Gastrocnemius medialis (tissue), 4 donors: ENCODE measurements at regions of chr10 and their contacts with region 1.

Region 1: GRCh38 chr10:59606551-59606961 is 103.1 kb downstream of the SLC16A9 start:
- DNase-seq: no peak
- ATAC-seq: no peak
- H3K4me3 ChIP-seq: no peak overlapping the region
- H3K27ac ChIP-seq: no peak overlapping the region
- H3K4me1 ChIP-seq: no peaks in the 10 kb centered on the region
- H3K27me3 ChIP-seq: no peaks in the 10 kb centered on the region
- CTCF ChIP-seq: no peak
- POLR2A ChIP-seq: no peak

Region 2: DNA sequence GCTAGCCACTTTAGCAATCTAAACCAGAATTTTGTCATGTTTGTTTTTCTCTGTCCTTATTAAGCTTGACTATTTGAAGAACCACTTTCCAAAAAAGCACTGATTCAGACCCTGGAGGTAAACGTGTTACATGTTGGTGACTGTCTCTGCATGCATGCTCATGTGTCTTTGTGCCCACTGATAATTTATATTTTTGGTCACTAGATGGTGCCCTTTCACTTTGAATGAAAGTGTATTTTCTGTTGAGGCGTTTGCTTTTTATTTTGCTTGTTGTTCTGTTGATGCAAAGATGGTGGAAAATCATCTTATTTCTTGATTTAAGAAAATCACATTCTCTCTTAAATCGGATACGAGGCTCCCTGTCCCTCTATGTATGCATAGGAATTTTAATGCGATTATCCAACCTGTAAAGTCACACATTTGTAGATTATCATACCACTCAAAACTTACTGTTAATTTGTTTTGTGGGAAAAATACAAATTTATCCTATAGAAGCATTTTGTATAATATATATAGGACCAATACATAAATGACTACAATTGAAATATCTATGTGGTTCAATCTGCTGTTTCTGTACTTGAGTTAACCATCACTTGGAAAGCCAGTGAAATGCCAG is 824.6 kb before region 1 on chr10:
- in situ Hi-C with region 1: loop called in 2 of 4 experiments (anchors 25 kb)
- intact Hi-C with region 1: no loop called
- DNase-seq: no peak
- ATAC-seq: peak; percentile 50 to 61
- H3K4me3 ChIP-seq: no peak overlapping the region
- H3K27ac ChIP-seq: peak overlapping the region; percentile 13 to 55 (median 40)
- H3K4me1 ChIP-seq: peaks cover 10 to 12% of the 10 kb centered on the region in 2 donors
- H3K27me3 ChIP-seq: no peaks in the 10 kb centered on the region
- CTCF ChIP-seq: peak in 4 of 5 experiments; percentile 33 to 60 (median 53)
- POLR2A ChIP-seq: no peak

Region 3: GRCh38 chr10:59508296-59508695 is 98.3 kb before region 1 on chr10:
- in situ Hi-C with region 1: no loop called
- intact Hi-C with region 1: no loop called
- DNase-seq: no peak
- ATAC-seq: no peak
- H3K4me3 ChIP-seq: no peak overlapping the region
- H3K27ac ChIP-seq: no peak overlapping the region
- H3K4me1 ChIP-seq: no peaks in the 10 kb centered on the region
- H3K27me3 ChIP-seq: no peaks in the 10 kb centered on the region
- CTCF ChIP-seq: no peak
- POLR2A ChIP-seq: no peak